ENCODE measurements at regions of chr22 and their contacts with region 1.

Region 1: DNA sequence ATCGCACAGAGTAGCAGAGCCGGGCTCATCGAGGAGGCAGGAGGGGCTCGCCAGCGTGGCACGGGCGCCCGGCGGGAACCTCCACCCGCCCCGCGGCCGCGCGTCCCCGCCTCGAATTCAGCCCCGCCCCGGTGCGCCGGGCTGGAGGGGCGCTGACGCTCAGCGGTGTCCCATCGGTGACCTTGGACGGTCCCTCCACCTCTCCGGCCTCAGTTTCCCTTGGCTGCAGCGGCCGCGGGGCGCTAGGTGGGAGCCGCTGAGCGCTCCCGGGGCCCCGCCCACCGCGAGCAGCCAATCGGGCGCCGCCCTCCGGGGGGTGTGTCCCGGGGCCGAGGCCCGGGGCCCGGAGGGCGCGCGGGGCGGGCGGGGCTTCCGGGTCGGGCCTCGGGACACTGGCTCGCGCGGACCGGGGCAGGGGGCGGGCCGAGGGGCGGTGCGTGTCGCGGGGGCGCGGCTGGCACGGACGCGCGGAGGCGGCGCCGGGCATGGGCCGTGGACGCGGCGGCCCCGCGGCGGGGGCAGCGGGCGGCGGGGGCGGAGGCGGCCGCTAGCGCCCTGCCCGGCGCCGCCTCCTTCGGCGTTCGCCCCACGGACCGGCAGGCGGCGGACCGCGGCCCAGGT is at the start of gene PPARA:
- DNase-seq: peak; percentile 94
- H3K4me3 ChIP-seq: peak within 1 kb of the TSS; percentile 72 to 97 (median 96)
- H3K27ac ChIP-seq: peak within 1 kb of the TSS; percentile 86 to 95 (median 92)
- H3K4me1 ChIP-seq: peaks cover 0 to 27% (median 20%) of the 10 kb centered on the region in 4 donors
- H3K27me3 ChIP-seq: no peaks in the 10 kb centered on the region
- CTCF ChIP-seq: no peak
- EP300 ChIP-seq: no peak
- POLR2A ChIP-seq: no peak
- total RNA-seq, gene PPARA: 16.6 to 21.4 (median 20.6) TPM

Region 2: GRCh38 chr22:46250035-46250782 is 100.1 kb after region 1 on chr22 and contains the start of gene CDPF1:
- intact Hi-C with region 1: loop called (anchors 5 kb)
- DNase-seq: peak; percentile 94
- H3K4me3 ChIP-seq: peak within 1 kb of the TSS; percentile 78 to 91 (median 86)
- H3K27ac ChIP-seq: peak within 1 kb of the TSS; percentile 86 to 91 (median 90)
- H3K4me1 ChIP-seq: peaks cover 0 to 45% (median 30%) of the 10 kb centered on the region in 4 donors
- H3K27me3 ChIP-seq: no peaks in the 10 kb centered on the region
- CTCF ChIP-seq: no peak
- EP300 ChIP-seq: no peak
- POLR2A ChIP-seq: peak; percentile 51 to 53
- total RNA-seq, gene CDPF1: 15.8 to 18.9 (median 17.5) TPM

Region 3: DNA sequence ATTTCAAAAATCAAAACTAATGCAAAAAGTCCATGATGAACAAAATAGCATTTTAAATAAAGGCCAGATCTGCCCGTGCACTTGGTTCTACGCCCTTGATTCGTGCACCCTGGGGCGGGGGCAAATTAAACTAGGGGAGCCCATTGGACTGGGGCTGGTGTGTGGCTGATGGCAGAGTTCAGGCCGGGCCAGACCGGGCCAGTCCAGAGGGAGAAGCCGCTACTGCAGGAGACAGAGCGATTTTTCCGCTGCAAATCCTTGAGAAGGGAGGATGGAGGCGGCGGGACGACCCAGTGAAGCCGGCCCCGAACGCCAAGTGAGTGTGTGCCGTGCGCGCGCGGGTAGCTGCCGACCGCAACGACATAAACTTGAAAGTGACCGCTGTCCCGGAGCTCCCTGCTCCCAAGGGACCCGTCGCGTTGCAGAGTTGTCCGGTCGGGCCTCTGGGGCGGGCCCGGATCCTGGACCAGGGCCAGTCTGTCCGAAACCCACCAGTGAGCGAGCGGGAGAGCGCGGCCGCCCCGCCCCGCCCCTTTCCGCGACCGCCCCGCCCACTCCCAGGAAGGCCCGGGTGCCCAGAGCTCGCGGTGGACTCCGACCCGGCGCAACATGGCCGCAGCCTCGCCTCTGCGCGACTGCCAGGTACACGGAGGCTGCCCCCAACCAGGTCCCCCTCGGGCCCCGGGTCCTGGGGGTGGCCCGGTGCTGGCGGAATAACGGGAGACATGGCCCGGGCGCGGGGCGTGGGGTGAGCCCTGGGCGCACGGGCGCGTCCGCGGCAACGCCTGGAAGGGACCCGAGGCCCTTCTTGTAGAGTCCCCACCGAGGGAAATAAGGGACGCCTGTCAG is 117.5 kb after region 1 on chr22 and contains the start of gene TTC38:
- intact Hi-C with region 1: loop called (anchors 2 kb)
- DNase-seq: peak; percentile 96
- H3K4me3 ChIP-seq: peak within 1 kb of the TSS; percentile 61 to 78 (median 70)
- H3K27ac ChIP-seq: peak within 1 kb of the TSS; percentile 82 to 87 (median 86)
- H3K4me1 ChIP-seq: peaks cover 0 to 35% (median 26%) of the 10 kb centered on the region in 4 donors
- H3K27me3 ChIP-seq: no peaks in the 10 kb centered on the region
- CTCF ChIP-seq: peak in 1 of 4 experiments; percentile 6
- EP300 ChIP-seq: no peak
- POLR2A ChIP-seq: peak; percentile 18 to 52
- total RNA-seq, gene TTC38: 34.6 to 56.0 (median 40.0) TPM

Region 4: GRCh38 chr22:46296257-46297150 is 146.4 kb after region 1 on chr22 and contains the start of gene GTSE1:
- intact Hi-C with region 1: loop called (anchors 5 kb)
- DNase-seq: peak; percentile 99
- H3K4me3 ChIP-seq: peak within 1 kb of the TSS; percentile 35 to 62 (median 56)
- H3K27ac ChIP-seq: peak within 1 kb of the TSS; percentile 89 to 96 (median 94)
- H3K4me1 ChIP-seq: peaks cover 0 to 19% (median 16%) of the 10 kb centered on the region in 4 donors
- H3K27me3 ChIP-seq: no peaks in the 10 kb centered on the region
- CTCF ChIP-seq: no peak
- EP300 ChIP-seq: no peak
- POLR2A ChIP-seq: peak in 1 of 2 donors; percentile 33
- total RNA-seq, gene GTSE1: 0.27 to 0.36 (median 0.28) TPM in 3 of 4 donors, not detected in the other